ENCODE measurements at regions of chr15 and their contacts with region 1.

Region 1: GRCh38 chr15:86624261-86625036 is 544.8 kb downstream of the AGBL1 start:
- DNase-seq: peak; percentile 81 to 84
- H3K4me3 ChIP-seq: no peak overlapping the region
- H3K4me3 Mint-ChIP-seq: no peak overlapping the region
- H3K27ac Mint-ChIP-seq: no peak overlapping the region
- H3K4me1 ChIP-seq: peaks cover 17% of the 10 kb centered on the region
- H3K4me1 Mint-ChIP-seq: peaks cover 17% of the 10 kb centered on the region
- H3K27me3 ChIP-seq: no peaks in the 10 kb centered on the region
- H3K27me3 Mint-ChIP-seq: no peaks in the 10 kb centered on the region
- CTCF ChIP-seq: peak; percentile 53 to 66

Region 2: DNA sequence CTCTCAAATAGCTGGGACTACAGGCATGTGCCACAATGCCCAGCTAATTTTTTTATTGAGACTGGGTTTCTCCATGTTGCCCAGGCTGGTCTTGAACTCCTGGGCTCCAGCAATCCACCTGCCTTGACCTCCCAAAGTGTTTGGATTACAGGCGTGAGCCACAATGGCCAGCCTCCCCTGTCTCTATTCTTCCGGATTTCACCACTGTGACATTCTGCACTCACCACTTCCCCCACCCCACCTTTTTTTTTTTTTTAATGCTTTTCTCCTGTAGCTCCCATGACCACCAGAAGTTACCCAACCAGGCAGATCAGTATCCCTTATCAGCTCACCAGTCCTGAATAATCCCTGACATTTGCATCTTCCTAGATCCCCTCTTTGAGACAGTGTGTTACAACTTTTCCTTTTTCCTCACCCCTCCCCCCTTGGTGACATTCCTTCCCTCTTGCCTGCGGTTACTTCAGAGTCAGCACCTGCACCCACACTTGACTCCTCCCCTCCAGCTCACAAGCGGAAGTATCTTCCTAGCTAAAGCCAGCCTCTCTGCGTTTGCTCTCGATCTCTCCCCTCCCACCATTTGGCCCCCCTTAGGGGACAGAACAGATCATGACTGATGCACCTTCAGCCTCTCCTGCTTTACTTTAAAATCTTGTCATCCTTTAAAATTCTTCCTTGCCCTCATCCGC is 1889.5 kb before region 1 on chr15:
- CTCF ChIA-PET with region 1: no interaction called
- POLR2A ChIA-PET with region 1: interaction called, 13 read pairs
- intact Hi-C with region 1: no loop called
- DNase-seq: peak; percentile 95
- H3K4me3 ChIP-seq: no peak overlapping the region; the same call in 1 of the 2 replicates
- H3K4me3 Mint-ChIP-seq: peak overlapping the region; percentile 66
- H3K27ac Mint-ChIP-seq: peak overlapping the region; percentile 94
- H3K4me1 ChIP-seq: peaks cover 27% of the 10 kb centered on the region
- H3K4me1 Mint-ChIP-seq: peaks cover 22% of the 10 kb centered on the region
- H3K27me3 ChIP-seq: no peaks in the 10 kb centered on the region
- H3K27me3 Mint-ChIP-seq: no peaks in the 10 kb centered on the region
- CTCF ChIP-seq: no peak

Region 3: GRCh38 chr15:86570738-86571137 is 53.7 kb before region 1 on chr15:
- CTCF ChIA-PET with region 1: no interaction called
- POLR2A ChIA-PET with region 1: no interaction called
- intact Hi-C with region 1: no loop called
- DNase-seq: no peak
- H3K4me3 ChIP-seq: no peak overlapping the region
- H3K4me3 Mint-ChIP-seq: no peak overlapping the region
- H3K27ac Mint-ChIP-seq: no peak overlapping the region
- H3K4me1 ChIP-seq: no peaks in the 10 kb centered on the region
- H3K4me1 Mint-ChIP-seq: no peaks in the 10 kb centered on the region
- H3K27me3 ChIP-seq: no peaks in the 10 kb centered on the region
- H3K27me3 Mint-ChIP-seq: no peaks in the 10 kb centered on the region
- CTCF ChIP-seq: no peak

Region 4: GRCh38 chr15:86701620-86701980 is 77.2 kb after region 1 on chr15:
- CTCF ChIA-PET with region 1: interaction called, 12 read pairs
- POLR2A ChIA-PET with region 1: no interaction called
- intact Hi-C with region 1: no loop called
- DNase-seq: no peak
- H3K4me3 ChIP-seq: no peak overlapping the region
- H3K4me3 Mint-ChIP-seq: no peak overlapping the region
- H3K27ac Mint-ChIP-seq: no peak overlapping the region
- H3K4me1 ChIP-seq: no peaks in the 10 kb centered on the region
- H3K4me1 Mint-ChIP-seq: no peaks in the 10 kb centered on the region
- H3K27me3 ChIP-seq: no peaks in the 10 kb centered on the region
- H3K27me3 Mint-ChIP-seq: peaks cover 17% of the 10 kb centered on the region
- CTCF ChIP-seq: no peak

Region 5: GRCh38 chr15:86773736-86774135 is 149.3 kb after region 1 on chr15:
- CTCF ChIA-PET with region 1: interaction called, 3 read pairs
- POLR2A ChIA-PET with region 1: no interaction called
- intact Hi-C with region 1: loop called (anchors 10 kb)
- DNase-seq: no peak
- H3K4me3 ChIP-seq: no peak overlapping the region
- H3K4me3 Mint-ChIP-seq: no peak overlapping the region
- H3K27ac Mint-ChIP-seq: no peak overlapping the region
- H3K4me1 ChIP-seq: peaks cover 27% of the 10 kb centered on the region
- H3K4me1 Mint-ChIP-seq: peaks cover 7% of the 10 kb centered on the region
- H3K27me3 ChIP-seq: no peaks in the 10 kb centered on the region
- H3K27me3 Mint-ChIP-seq: no peaks in the 10 kb centered on the region
- CTCF ChIP-seq: no peak

Region 6: DNA sequence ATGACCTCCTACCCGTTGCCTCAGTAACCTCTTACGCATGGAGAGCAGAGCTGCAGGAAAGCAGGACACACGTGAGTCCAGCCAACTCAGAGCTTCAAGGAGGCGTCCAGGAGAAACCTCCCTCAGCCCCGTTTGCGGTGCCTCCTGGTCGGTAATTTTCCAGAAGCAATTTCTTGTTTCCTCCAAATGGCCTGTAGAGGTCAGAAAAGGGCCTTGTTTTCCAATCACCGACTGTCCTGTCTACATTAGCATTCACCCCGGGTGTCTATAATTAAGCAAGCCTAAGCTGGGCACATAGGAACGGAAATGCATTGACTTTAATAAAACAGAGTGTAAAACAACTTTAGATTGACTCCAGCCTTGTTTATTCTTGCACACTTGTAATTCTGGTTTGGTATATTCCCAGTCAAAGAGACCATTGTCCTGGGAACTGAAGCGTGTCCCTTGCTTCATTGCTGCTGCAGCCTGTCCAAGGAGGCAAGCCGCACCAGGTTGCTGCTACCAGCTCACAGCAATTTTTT is 291.4 kb after region 1 on chr15:
- CTCF ChIA-PET with region 1: no interaction called
- POLR2A ChIA-PET with region 1: no interaction called
- intact Hi-C with region 1: loop called (anchors 1 kb)
- DNase-seq: peak; percentile 37 to 48
- H3K4me3 ChIP-seq: no peak overlapping the region
- H3K4me3 Mint-ChIP-seq: no peak overlapping the region
- H3K27ac Mint-ChIP-seq: no peak overlapping the region
- H3K4me1 ChIP-seq: no peaks in the 10 kb centered on the region
- H3K4me1 Mint-ChIP-seq: no peaks in the 10 kb centered on the region
- H3K27me3 ChIP-seq: no peaks in the 10 kb centered on the region; the same call in none of the 2 replicates
- H3K27me3 Mint-ChIP-seq: peaks cover 15% of the 10 kb centered on the region
- CTCF ChIP-seq: peak; percentile 37 to 58

Region 7: DNA sequence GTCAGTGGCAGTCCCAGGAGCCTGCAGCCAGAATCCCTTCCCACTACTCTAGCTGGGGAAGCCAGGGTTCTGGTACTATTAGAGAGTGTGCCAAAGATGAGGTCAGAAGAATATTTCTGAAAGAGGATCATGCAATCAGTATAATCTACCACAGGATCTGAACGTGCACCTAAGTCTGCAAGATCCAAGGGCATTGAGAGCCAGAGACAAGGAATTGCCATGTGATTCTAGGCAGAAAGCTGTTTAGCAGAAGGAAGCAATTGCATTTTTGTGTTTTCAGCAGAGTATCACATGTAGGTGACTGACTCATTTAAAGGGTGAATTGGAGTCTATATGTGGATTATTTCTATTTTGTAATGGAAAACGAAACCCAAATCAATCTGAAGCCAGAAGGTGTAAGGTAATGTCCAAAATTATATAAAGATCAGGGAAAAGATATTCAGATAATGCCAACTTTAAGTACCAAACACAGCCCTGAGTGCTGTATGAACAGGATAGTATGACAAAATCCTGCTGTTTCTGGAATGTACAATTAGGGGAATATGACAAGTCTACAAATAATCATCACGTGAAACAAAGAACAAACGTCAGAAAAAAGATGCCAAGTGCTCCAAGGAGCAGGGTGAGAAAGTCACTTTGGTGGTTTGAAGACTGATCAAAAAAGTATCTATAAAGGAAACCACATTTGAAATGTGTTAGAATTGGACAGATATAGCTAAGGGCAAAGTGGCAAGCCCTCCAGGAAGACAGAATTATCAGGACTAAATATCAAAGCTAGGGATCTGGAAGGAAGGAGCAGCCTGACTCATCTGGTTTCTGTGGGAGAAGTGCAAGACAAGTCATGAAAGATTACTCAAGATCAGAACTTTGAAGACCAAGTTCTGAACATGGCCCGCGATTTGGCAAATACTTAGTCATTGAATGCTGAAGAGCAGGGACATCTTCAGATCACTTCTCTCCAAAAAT is 595.5 kb after region 1 on chr15:
- CTCF ChIA-PET with region 1: no interaction called
- POLR2A ChIA-PET with region 1: no interaction called
- intact Hi-C with region 1: no loop called
- DNase-seq: no peak
- H3K4me3 ChIP-seq: no peak overlapping the region
- H3K4me3 Mint-ChIP-seq: no peak overlapping the region
- H3K27ac Mint-ChIP-seq: no peak overlapping the region
- H3K4me1 ChIP-seq: no peaks in the 10 kb centered on the region
- H3K4me1 Mint-ChIP-seq: no peaks in the 10 kb centered on the region
- H3K27me3 ChIP-seq: no peaks in the 10 kb centered on the region
- H3K27me3 Mint-ChIP-seq: peaks cover 5% of the 10 kb centered on the region
- CTCF ChIP-seq: no peak

Region 8: DNA sequence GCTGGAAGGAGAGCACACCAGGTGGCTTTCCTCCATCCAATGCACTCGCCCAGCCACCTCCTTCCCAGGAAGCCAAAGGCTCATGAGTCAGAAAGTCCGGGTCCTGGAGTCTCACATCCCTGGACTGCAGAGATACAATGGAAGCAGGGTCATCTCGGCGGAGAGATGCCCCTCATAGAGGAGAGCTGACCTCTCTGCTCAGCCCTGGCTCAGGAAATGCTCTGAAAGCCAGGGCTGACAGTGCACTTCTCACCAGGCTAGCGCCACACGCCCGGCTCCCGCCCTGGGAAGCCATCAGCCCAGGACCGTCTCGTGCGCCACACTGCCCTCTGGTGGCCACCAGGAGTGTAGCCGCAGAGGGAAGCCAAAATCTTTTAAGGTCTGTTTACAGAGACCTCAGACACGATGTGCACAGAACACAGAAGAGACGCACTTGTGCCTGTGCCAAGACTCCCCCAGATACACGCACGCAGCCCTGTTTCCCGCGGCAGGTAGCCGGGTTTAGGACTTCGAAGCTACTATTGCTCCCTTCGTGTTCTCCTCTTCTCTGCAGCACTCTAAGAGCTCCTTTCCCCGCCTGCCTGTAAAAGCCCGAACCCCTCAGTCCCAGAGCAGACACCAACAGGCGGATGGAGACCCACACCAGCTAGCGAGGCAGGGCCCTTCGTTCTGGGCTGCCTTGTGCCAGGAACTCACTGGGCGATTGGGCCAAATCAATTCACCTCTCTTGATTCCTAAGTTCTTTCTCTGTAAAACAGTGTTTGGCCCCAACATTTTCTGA is 1622.4 kb after region 1 on chr15:
- CTCF ChIA-PET with region 1: no interaction called
- POLR2A ChIA-PET with region 1: no interaction called
- intact Hi-C with region 1: loop called (anchors 10 kb)
- DNase-seq: peak; percentile 66 to 79
- H3K4me3 ChIP-seq: no peak overlapping the region
- H3K4me3 Mint-ChIP-seq: no peak overlapping the region
- H3K27ac Mint-ChIP-seq: no peak overlapping the region
- H3K4me1 ChIP-seq: no peaks in the 10 kb centered on the region
- H3K4me1 Mint-ChIP-seq: no peaks in the 10 kb centered on the region
- H3K27me3 ChIP-seq: no peaks in the 10 kb centered on the region
- H3K27me3 Mint-ChIP-seq: peaks cover 10% of the 10 kb centered on the region
- CTCF ChIP-seq: peak; percentile 86 to 87

Measured in Caco-2 (cell line).